ENCODE measurements at regions of chr9 and their contacts with region 1.

Region 1: GRCh38 chr9:89911721-89912604 is 307.2 kb downstream of the GADD45G start:
- H3K4me3 ChIP-seq: no peak overlapping the region
- H3K27ac ChIP-seq: no peak overlapping the region
- H3K4me1 ChIP-seq: no peaks in the 10 kb centered on the region
- CTCF ChIP-seq: no peak

Region 2: GRCh38 chr9:89627239-89627871 is 284.6 kb before region 1 on chr9:
- CTCF ChIA-PET with region 1: interaction called, 12 read pairs
- POLR2A ChIA-PET with region 1: no interaction called
- H3K4me3 ChIP-seq: no peak overlapping the region
- H3K27ac ChIP-seq: no peak overlapping the region
- H3K4me1 ChIP-seq: no peaks in the 10 kb centered on the region
- CTCF ChIP-seq: no peak